Cardiac septum (tissue), 1 donor: ENCODE measurements at regions of chr15 and their contacts with region 1.

Region 1: DNA sequence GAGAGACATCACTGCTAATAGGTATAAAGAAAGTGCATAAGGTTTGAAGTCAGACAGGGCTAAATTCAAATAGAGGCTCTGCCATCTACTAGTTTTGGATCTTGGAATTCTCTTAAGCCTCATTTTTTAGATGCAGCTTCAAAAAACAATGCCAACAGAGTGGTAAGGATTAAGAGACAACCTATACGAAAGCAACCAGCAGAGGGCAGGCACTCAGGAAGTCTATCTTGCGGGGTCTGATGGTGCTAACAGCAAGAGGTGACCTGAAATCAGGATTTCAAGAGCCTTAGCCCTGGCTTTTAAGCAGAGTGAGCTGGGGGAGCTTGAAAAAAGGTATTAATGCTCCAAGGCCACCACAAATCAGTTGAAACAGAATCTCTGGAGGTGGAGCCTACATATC is 40.7 kb downstream of the LDHAL6B start:
- DNase-seq: no peak

Region 2: GRCh38 chr15:59437817-59438562 is 190.6 kb after region 1 on chr15 and contains the start of gene FAM81A:
- intact Hi-C with region 1: loop called (anchors 10 kb)
- DNase-seq: peak; percentile 92
- total RNA-seq, gene FAM81A: 1.8 TPM

Region 3: GRCh38 chr15:59453474-59454215 is 206.3 kb after region 1 on chr15:
- intact Hi-C with region 1: no loop called
- DNase-seq: no peak